Pancreas (tissue), 10 donors: ENCODE measurements at regions of chr11 and their contacts with region 1.

Region 1: GRCh38 chr11:79600711-79601110 is 159.9 kb upstream of the TENM4 start:
- DNase-seq: no peak
- ATAC-seq: no peak
- H3K4me3 ChIP-seq: no peak overlapping the region
- H3K27ac ChIP-seq: no peak overlapping the region
- H3K4me1 ChIP-seq: no peaks in the 10 kb centered on the region
- H3K27me3 ChIP-seq: no peaks in the 10 kb centered on the region
- CTCF ChIP-seq: no peak

Region 2: DNA sequence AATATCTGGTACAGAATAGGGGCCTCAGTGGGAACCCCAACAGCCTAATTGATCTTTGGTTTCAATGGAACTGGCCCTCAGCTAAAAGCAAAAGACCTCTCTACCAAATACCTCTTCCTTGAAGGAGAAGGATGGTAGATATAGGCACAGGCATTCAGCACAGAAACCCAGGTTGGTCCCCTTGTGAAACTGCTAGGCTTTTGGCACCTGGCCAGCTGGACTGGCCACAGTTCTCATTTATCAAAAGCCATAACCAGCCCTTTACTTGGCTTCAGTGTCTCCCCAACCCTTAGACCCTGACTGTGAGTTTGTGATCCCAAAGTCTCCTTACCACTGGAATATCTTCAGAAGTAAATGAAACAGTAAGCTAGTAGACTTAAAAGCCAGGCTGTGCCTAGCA is 312.8 kb before region 1 on chr11:
- intact Hi-C with region 1: no loop called
- DNase-seq: peak in 1 of 6 donors; percentile 31
- ATAC-seq: no peak
- H3K4me3 ChIP-seq: no peak overlapping the region
- H3K27ac ChIP-seq: no peak overlapping the region
- H3K4me1 ChIP-seq: no peaks in the 10 kb centered on the region
- H3K27me3 ChIP-seq: no peaks in the 10 kb centered on the region
- CTCF ChIP-seq: no peak

Region 3: DNA sequence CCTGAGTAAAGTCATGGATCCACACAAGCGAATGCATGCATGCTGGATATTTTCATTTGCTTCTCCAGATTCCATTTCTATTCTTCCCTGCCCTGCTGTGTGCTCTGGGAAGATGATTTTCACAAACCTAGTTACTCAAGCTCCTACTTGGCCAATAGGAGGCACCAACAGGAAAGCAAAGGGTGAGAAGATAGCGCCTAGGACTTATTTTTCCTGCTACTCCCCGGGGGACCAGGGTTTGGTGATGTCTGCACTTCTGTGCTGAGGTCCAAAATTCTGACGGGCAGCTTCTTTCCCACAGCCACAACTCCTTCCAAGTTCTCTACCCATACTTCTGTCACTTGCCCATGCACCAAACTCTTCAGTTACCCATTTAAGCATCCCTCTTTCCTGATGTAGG is 349.5 kb after region 1 on chr11:
- intact Hi-C with region 1: no loop called
- DNase-seq: no peak
- ATAC-seq: no peak
- H3K4me3 ChIP-seq: no peak overlapping the region
- H3K27ac ChIP-seq: no peak overlapping the region
- H3K4me1 ChIP-seq: no peaks in the 10 kb centered on the region
- H3K27me3 ChIP-seq: no peaks in the 10 kb centered on the region
- CTCF ChIP-seq: no peak

Region 4: GRCh38 chr11:80436564-80436963 is 835.9 kb after region 1 on chr11:
- intact Hi-C with region 1: loop called in 1 of 3 experiments (anchors 5 kb)
- DNase-seq: no peak
- ATAC-seq: no peak
- H3K4me3 ChIP-seq: no peak overlapping the region
- H3K27ac ChIP-seq: no peak overlapping the region
- H3K4me1 ChIP-seq: no peaks in the 10 kb centered on the region
- H3K27me3 ChIP-seq: no peaks in the 10 kb centered on the region
- CTCF ChIP-seq: no peak